ENCODE measurements at regions of chr10 and their contacts with region 1.

Region 1: DNA sequence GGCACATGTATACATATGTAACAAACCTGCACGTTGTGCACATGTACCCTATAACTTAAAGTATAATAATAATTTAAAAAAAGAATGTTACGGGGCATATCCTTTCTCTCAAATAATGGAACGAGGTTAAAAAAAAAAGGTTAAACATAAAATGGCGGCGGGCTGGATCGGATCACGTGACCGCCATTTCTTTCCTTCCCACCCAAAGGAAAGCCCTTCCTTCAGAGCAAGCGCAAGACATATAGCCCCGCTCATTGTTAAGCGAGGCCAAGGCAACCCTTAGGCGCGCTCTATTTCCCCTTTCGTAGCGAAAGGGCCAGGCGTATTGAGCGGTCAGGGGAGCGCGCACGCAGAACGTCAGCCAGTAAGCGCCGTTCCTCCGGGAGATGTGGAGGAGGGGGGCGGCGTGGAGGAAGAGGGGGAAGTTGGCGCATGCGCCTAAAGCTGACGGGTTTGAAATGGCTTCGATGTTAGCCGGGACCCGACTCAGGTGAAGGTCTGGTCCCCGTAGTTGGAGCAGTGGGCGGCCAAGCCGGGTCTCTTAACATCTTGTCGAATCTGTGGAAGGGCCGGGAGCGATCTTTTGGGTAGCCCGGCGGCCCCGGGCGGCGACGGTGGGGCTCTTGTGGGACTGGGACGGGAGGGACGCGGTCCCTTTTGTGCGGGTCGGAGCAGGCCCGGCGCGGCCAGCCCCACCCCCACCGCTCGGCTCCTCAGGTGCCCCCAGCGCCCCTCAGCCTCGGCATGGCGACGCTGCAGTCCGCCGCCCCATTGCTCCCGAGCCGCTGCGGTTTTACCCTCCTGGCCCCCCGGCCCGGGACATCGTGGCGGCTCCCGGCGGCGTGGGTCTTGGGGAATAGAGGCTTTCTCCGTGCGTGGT is at the start of gene CCAR1:
- DNase-seq: peak; percentile 96 to 98 (median 97)
- H3K4me3 ChIP-seq: peak within 1 kb of the TSS; percentile 93
- H3K27ac ChIP-seq: peak within 1 kb of the TSS; percentile 94 to 96
- H3K4me1 ChIP-seq: peaks cover 4% of the 10 kb centered on the region
- H3K27me3 ChIP-seq: no peaks in the 10 kb centered on the region
- CTCF ChIP-seq: no peak
- EP300 ChIP-seq: no peak
- POLR2A ChIP-seq: peak; percentile 88
- total RNA-seq, gene CCAR1: 42.1 to 65.4 (median 52.2) TPM

Region 2: DNA sequence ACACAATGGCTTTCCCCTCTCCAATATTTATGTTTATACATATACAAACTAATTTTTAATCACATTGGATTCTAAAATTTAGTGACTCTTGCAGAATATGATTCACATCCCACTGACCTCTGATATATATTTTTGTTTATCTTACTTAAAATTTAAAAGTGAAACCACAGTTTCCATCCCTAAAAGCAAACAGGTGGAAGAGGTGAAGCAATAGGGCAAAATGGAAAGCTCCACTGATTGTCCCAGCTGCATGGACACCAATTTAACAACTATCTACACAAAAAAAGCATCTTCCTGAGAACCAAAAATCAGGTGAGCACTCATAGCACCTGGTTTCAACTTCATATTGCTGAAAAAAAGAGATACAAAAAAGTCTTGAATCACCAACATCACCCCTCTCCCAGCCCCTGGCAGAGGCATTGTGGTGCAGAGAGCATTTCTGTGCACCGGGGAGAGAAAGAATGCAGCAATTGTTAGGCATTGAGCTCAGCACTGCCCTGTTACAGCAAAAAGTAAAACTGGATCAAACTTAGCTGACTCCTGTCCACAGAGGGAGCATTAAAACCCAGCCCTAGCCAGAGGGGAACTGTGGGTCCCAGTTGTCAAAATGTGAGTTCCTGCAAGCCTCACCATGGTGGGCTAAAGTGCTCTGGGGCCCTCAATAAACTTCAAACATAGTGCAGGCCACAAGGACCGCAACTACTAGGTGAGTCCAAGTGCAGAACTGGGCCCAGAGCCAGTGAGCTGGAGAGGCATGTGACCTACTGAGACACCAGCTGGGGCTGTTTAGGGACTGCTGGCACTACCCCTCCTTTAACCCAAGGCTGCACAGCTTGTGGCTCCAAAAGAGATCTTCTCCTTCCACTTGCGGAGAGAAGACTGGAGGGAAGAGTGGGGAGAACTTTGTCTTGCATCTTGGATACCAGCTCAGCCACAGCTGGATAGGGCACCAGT is 744.5 kb before region 1 on chr10:
- intact Hi-C with region 1: no loop called
- DNase-seq: peak in 1 of 5 donors; percentile 27
- H3K4me3 ChIP-seq: no peak overlapping the region
- H3K27ac ChIP-seq: no peak overlapping the region
- H3K4me1 ChIP-seq: no peaks in the 10 kb centered on the region
- H3K27me3 ChIP-seq: no peaks in the 10 kb centered on the region
- CTCF ChIP-seq: no peak
- EP300 ChIP-seq: no peak
- POLR2A ChIP-seq: no peak

Region 3: GRCh38 chr10:68406815-68407548 is 314.1 kb before region 1 on chr10 and contains the start of gene RUFY2:
- intact Hi-C with region 1: loop called in 1 of 4 experiments (anchors 10 kb)
- DNase-seq: peak; percentile 81 to 91 (median 88)
- H3K4me3 ChIP-seq: peak within 1 kb of the TSS; percentile 98
- H3K27ac ChIP-seq: peak within 1 kb of the TSS; percentile 95 to 96
- H3K4me1 ChIP-seq: no peaks in the 10 kb centered on the region
- H3K27me3 ChIP-seq: no peaks in the 10 kb centered on the region
- CTCF ChIP-seq: peak; percentile 46 to 99 (median 96)
- EP300 ChIP-seq: no peak
- POLR2A ChIP-seq: peak; percentile 64
- total RNA-seq, gene RUFY2: 21.1 to 36.4 (median 29.8) TPM

Region 4: GRCh38 chr10:68876246-68877138 is 155.5 kb after region 1 on chr10:
- intact Hi-C with region 1: no loop called
- DNase-seq: no peak
- H3K4me3 ChIP-seq: no peak overlapping the region
- H3K27ac ChIP-seq: no peak overlapping the region
- H3K4me1 ChIP-seq: no peaks in the 10 kb centered on the region
- H3K27me3 ChIP-seq: no peaks in the 10 kb centered on the region
- CTCF ChIP-seq: no peak
- EP300 ChIP-seq: no peak
- POLR2A ChIP-seq: no peak

Measured in ovary (tissue), 10 donors.